OCI-LY7 (cell line): ENCODE measurements at regions of chr9 and their contacts with region 1.

Region 1: DNA sequence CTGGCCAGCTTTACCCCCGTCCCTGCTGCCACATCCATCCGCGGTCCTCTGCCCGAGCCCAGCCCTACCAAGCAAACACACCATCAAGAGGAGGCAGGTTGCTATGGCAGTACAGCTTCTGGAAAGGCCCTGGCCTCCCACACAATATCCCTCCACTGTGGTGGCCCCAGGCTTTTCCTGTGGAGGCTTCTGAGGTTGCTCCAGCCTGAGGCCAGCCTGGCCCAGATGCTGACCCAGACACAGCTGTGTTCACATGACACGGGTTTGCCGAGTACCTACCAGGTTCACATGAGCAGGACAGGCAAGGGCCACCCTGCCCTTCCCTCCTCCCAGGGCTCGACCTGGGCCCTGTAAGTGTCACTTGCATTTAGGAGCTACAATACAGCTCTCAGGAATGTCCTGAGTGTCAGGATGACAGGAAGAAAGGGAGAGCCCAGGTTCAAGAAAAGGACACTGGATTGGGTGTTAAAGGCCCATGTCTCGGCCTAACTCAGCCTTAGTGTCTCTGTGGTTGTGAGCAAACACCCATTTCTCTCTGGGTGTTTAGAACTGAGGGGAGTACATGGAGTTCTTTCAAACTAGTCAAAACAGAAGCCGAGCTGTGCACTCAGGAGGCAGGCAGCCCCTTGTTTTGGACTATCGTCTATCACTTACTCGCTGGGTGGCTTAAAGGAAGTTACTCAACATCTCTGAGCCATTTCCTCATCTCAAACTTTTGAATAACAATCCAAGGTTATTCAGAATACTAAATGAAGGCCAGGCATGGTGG is 40.2 kb downstream of the NAIF1 start:
- DNase-seq: peak; percentile 39
- H3K4me3 ChIP-seq: peak overlapping the region; percentile 56
- H3K27ac ChIP-seq: peak overlapping the region; percentile 78
- H3K4me1 ChIP-seq: peaks cover 71% of the 10 kb centered on the region
- CTCF ChIP-seq: no peak

Region 2: GRCh38 chr9:126956917-126957686 is 1069.9 kb before region 1 on chr9:
- CTCF ChIA-PET with region 1: no interaction called
- POLR2A ChIA-PET with region 1: no interaction called
- intact Hi-C with region 1: no loop called
- DNase-seq: no peak
- H3K4me3 ChIP-seq: no peak overlapping the region
- H3K27ac ChIP-seq: no peak overlapping the region
- H3K4me1 ChIP-seq: no peaks in the 10 kb centered on the region
- CTCF ChIP-seq: no peak

Region 3: DNA sequence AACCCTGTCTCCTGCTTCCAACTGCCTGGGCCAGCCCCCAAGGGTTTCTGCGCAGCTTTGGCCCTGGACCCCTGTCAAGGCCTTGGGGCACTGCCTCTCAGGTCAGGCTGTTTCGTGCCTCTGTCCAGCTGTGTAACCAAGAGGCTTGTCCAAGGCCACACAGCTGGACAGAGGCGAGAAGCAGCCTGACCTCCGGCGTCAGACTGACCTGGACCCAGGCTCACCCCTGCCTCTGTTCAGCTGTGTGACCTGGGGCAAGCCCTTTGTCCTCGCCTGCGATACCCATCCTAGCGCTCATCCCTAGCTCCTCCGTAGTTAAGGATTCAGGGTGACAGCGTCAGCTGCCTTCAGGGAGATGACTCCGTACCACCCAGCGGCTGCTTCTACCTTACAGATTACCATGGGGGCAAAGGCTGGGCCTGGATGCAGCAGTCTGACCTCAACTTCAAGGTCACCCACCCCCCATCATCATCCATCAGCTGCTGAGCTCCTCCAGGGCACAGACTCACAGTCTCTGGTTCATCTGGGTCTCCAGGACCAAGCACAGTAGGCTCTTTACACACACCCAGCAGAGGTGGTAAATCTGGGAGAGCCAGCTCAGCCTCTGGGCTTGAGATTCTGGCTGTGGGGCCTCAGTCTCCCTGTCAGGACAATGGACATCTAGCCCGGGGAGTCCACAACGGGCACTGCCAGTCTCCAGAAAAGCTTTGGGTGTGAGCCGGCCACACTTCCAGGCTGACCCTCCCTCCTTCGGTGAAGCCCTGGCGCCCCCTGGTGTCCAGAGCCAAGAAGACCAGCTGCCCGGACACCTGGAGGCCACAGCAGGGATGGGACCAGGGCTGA is 157.4 kb before region 1 on chr9:
- CTCF ChIA-PET with region 1: no interaction called
- POLR2A ChIA-PET with region 1: no interaction called
- intact Hi-C with region 1: no loop called
- DNase-seq: peak; percentile 87
- H3K4me3 ChIP-seq: no peak overlapping the region
- H3K27ac ChIP-seq: no peak overlapping the region
- H3K4me1 ChIP-seq: peaks cover 9% of the 10 kb centered on the region
- CTCF ChIP-seq: peak; percentile 93

Region 4: GRCh38 chr9:127930231-127931091 is 96.5 kb before region 1 on chr9 and contains the start of gene PIP5KL1:
- CTCF ChIA-PET with region 1: no interaction called
- POLR2A ChIA-PET with region 1: no interaction called
- intact Hi-C with region 1: no loop called
- DNase-seq: peak; percentile 84
- H3K4me3 ChIP-seq: peak within 1 kb of the TSS; percentile 67
- H3K27ac ChIP-seq: no peak within 1 kb of the TSS
- H3K4me1 ChIP-seq: peaks cover 47% of the 10 kb centered on the region
- CTCF ChIP-seq: no peak
- total RNA-seq, gene PIP5KL1: 0.59 and 0.95 TPM in 2 replicates

Region 5: DNA sequence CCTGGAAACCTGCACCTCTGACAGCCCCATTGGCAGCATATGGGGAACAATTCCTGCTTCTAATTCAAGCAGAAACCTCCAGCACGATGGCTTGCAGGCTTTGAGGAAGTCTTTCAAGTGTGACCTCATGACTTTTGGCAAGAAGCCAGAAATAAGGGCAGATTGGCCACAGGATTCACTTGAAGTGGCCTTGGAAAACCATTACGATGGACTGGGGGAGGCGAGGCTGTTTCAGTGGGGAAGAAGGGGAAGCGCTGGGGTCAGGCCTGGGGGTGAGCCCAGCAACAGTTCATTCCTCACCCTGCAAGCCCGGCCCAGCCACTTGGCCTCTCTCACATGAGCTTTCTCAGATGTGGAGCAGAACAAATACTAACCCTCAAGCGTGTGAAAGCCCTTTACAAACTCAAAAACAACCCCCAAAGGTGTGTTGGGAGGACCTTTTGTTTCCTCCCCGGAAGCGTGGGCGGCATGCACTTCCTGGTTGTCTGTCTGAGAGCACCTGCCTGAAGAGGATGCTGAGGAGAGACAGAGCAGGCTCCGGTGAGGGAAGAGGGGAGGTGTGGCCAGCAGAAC is 19.3 kb before region 1 on chr9:
- CTCF ChIA-PET with region 1: no interaction called
- POLR2A ChIA-PET with region 1: interaction called, 14 read pairs
- intact Hi-C with region 1: loop called (anchors 2 kb)
- DNase-seq: peak; percentile 92
- H3K4me3 ChIP-seq: peak overlapping the region; percentile 67
- H3K27ac ChIP-seq: peak overlapping the region; percentile 94
- H3K4me1 ChIP-seq: peaks cover 45% of the 10 kb centered on the region
- CTCF ChIP-seq: no peak

Region 6: DNA sequence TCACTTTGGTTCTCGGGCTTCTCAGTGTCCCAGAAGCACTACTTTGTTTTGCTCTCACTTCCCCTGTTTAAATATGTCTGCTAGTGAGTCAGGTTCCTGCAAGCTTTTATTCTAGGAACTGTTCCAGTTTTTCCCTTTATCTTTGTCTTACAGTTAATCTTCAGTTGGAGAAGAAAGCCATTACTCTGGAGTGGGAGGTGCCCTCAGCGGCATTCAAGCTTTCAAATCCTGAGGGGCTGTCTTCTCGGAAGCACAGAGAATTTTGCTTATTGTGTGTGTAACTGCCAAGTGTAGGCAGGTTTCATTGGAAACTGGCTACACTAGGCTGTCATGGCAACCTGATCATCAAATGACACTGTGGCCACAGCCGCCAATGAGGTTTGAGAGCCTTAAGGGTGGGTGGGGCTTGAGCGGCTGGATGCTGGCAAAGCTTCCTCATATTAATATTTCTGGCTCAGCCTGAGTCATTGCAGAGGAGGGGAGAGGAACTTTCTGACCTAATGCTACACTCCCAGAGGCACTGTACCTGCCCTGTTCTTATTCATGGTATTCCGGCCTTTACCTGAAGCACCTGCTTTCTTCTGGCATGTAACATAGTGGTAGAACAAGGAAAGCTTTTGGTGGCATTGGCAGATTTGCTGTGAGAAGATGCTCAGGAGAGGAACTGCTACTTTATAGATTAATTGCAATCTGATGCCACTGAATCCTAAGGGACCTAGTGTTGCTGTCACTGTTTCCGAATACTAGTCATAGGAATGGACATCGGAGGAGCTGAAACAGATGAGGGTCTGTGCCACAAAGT is 67.4 kb after region 1 on chr9:
- CTCF ChIA-PET with region 1: no interaction called
- POLR2A ChIA-PET with region 1: no interaction called
- intact Hi-C with region 1: no loop called
- DNase-seq: peak; percentile 58
- H3K4me3 ChIP-seq: no peak overlapping the region
- H3K27ac ChIP-seq: no peak overlapping the region
- H3K4me1 ChIP-seq: peaks cover 23% of the 10 kb centered on the region
- CTCF ChIP-seq: no peak